ENCODE measurements at regions of chr9 and their contacts with region 1.

Region 1: GRCh38 chr9:113705928-113706519 is 170.1 kb upstream of the ZNF618 start:
- DNase-seq: no peak

Region 2: DNA sequence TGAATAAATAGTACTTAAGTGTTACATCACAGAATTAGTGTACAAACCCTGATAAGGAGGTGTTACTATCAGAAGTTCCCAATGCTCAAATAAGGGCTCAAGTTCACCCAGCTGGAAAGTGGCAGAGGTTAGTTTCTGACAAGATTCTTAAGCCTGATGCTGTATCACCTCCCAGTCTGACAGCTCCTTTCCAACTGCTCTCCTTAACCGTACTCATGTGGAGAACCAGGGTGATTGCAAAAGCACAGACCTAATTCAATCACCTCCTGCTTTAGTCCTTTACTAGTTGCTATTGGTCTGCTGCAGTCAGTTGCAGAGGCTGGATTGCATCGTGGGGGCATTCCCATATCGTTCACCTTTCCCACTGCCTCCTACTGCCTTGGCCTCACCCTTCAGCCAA is 69.7 kb after region 1 on chr9:
- intact Hi-C with region 1: loop called in 1 of 2 experiments (anchors 2 kb)
- DNase-seq: no peak

Measured in posterior vena cava (tissue), 2 donors.